ENCODE measurements at regions of chr17 and their contacts with region 1.

Region 1: GRCh38 chr17:51914577-51914976 is 243.9 kb downstream of the CA10 start:
- DNase-seq: no peak
- H3K4me3 ChIP-seq: no peak overlapping the region
- CTCF ChIP-seq: no peak

Region 2: GRCh38 chr17:51685287-51685909 is 229.2 kb before region 1 on chr17:
- in situ Hi-C with region 1: loop called (anchors 10 kb)
- DNase-seq: no peak
- H3K4me3 ChIP-seq: no peak overlapping the region
- CTCF ChIP-seq: no peak

Region 3: DNA sequence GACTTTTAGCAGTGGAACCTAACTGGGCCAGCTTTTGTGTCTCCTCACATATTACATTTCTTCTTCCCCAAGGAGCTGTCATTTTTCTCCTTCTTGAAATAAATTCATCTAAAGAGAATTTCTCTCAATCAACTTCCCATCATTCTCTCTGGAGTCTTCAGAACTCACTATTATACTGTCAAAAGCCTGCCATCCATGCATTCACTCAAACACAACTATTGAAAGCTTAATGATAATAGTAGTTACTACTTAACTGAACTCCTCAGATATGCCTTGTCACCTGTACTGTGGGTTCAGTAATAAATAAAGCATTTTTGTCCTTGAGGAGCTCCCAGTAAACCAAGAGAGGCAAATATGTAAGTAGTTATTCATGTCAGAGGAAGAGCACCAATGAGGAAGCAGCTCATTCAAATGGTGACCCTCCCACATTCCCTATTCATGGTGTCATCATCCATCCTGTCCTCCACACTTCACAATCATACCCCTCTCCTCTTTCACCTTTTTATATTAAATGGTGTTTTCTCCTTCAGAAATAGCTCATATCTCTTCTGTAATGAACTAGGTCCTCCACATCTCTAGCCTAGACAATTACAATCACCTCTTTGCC is 81.3 kb after region 1 on chr17:
- in situ Hi-C with region 1: no loop called
- DNase-seq: no peak
- H3K4me3 ChIP-seq: no peak overlapping the region
- CTCF ChIP-seq: no peak

Measured in astrocyte of the cerebellum (primary cell).